Naive thymus-derived CD4-positive, alpha-beta T cell (primary cell): ENCODE measurements at regions of chr1 and their contacts with region 1.

Region 1: GRCh38 chr1:59243978-59244377 is 52.9 kb upstream of the FGGY start:
- DNase-seq: no peak
- ATAC-seq: no peak
- H3K4me3 ChIP-seq: no peak overlapping the region
- H3K4me3 Mint-ChIP-seq: no peak overlapping the region
- H3K27ac ChIP-seq: no peak overlapping the region
- H3K27ac Mint-ChIP-seq: no peak overlapping the region
- H3K4me1 ChIP-seq: no peaks in the 10 kb centered on the region
- H3K4me1 Mint-ChIP-seq: peaks cover 0 to 1% (median 0%) of the 10 kb centered on the region in 7 donors
- H3K27me3 ChIP-seq: no peaks in the 10 kb centered on the region
- H3K27me3 Mint-ChIP-seq: peaks cover 0 to 10% (median 0%) of the 10 kb centered on the region in 5 donors

Region 2: DNA sequence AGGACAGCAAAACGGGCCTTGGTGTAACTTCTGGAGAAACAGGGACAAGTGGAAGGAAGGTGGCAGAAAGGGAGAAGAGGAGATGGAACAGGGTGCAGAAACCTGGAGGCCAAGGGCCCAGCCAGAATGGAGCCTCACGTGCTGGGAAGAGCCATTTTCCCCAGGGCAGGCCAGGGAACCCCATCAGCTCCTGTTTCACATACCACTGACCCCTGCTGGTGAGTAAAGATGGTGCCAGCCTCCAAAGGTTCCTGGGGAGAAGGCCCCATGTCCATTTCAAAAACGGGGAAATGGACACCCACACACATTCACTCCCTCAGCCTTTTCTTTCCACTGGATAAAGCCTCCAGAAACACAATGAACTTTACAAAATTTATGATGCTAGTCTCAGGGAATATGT is 402.5 kb before region 1 on chr1:
- CTCF ChIA-PET with region 1: no interaction called
- POLR2A ChIA-PET with region 1: no interaction called
- intact Hi-C with region 1: no loop called
- DNase-seq: peak in 1 of 9 donors; percentile 5
- ATAC-seq: peak; percentile 44
- H3K4me3 ChIP-seq: no peak overlapping the region
- H3K4me3 Mint-ChIP-seq: no peak overlapping the region
- H3K27ac ChIP-seq: no peak overlapping the region
- H3K27ac Mint-ChIP-seq: no peak overlapping the region
- H3K4me1 ChIP-seq: no peaks in the 10 kb centered on the region
- H3K4me1 Mint-ChIP-seq: peaks cover 0 to 11% (median 1%) of the 10 kb centered on the region in 7 donors
- H3K27me3 ChIP-seq: no peaks in the 10 kb centered on the region
- H3K27me3 Mint-ChIP-seq: no peaks in the 10 kb centered on the region

Region 3: DNA sequence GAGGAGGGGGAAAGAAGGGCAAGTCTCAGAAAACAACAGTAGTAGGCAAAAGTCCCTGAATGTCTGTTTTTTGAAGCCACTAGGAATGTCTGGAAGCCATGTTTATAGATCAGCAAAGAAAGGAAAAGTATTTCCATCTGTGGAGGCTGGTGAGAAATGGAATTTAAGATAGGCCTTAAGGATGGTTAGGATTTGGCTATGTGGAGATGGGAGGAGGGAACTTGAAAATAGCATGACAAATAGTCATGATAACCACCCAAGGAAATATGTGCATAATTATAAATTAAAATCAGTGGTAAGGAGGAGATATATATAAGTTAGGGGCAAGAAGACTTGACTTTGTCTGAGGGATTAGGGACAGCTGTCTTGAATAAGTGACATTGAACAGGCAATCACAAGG is 19.1 kb after region 1 on chr1:
- CTCF ChIA-PET with region 1: no interaction called
- POLR2A ChIA-PET with region 1: no interaction called
- intact Hi-C with region 1: loop called in 1 of 2 experiments (anchors 1 kb)
- DNase-seq: no peak
- ATAC-seq: no peak
- H3K4me3 ChIP-seq: no peak overlapping the region
- H3K4me3 Mint-ChIP-seq: no peak overlapping the region
- H3K27ac ChIP-seq: no peak overlapping the region
- H3K27ac Mint-ChIP-seq: no peak overlapping the region
- H3K4me1 ChIP-seq: no peaks in the 10 kb centered on the region
- H3K4me1 Mint-ChIP-seq: peaks cover 0 to 2% (median 0%) of the 10 kb centered on the region in 7 donors
- H3K27me3 ChIP-seq: no peaks in the 10 kb centered on the region
- H3K27me3 Mint-ChIP-seq: peaks cover 0 to 13% (median 3%) of the 10 kb centered on the region in 5 donors

Region 4: GRCh38 chr1:60359431-60359830 is 1115.5 kb after region 1 on chr1:
- CTCF ChIA-PET with region 1: no interaction called
- POLR2A ChIA-PET with region 1: no interaction called
- intact Hi-C with region 1: no loop called
- DNase-seq: no peak
- ATAC-seq: no peak
- H3K4me3 ChIP-seq: no peak overlapping the region
- H3K4me3 Mint-ChIP-seq: no peak overlapping the region
- H3K27ac ChIP-seq: no peak overlapping the region
- H3K27ac Mint-ChIP-seq: no peak overlapping the region
- H3K4me1 ChIP-seq: no peaks in the 10 kb centered on the region
- H3K4me1 Mint-ChIP-seq: no peaks in the 10 kb centered on the region
- H3K27me3 ChIP-seq: no peaks in the 10 kb centered on the region
- H3K27me3 Mint-ChIP-seq: peaks cover 0 to 5% (median 0%) of the 10 kb centered on the region in 5 donors